B cell (primary cell): ENCODE measurements at regions of chr16 and their contacts with region 1.

Region 1: GRCh38 chr16:89909777-89910716 is 8.6 kb upstream of the MC1R start:
- DNase-seq: peak; percentile 77
- ATAC-seq: peak; percentile 80
- H3K4me3 ChIP-seq: no peak overlapping the region
- H3K4me3 Mint-ChIP-seq: no peak overlapping the region
- H3K27ac ChIP-seq: no peak overlapping the region
- H3K27ac Mint-ChIP-seq: no peak overlapping the region
- H3K4me1 ChIP-seq: peaks cover 0 to 5% of the 10 kb centered on the region in 2 donors
- H3K4me1 Mint-ChIP-seq: peaks cover 12% of the 10 kb centered on the region
- H3K27me3 ChIP-seq: no peaks in the 10 kb centered on the region
- H3K27me3 Mint-ChIP-seq: no peaks in the 10 kb centered on the region
- CTCF ChIP-seq: peak; percentile 91

Region 2: GRCh38 chr16:89706507-89707263 is 203.4 kb before region 1 on chr16:
- CTCF ChIA-PET with region 1: interaction called, 28 read pairs
- POLR2A ChIA-PET with region 1: no interaction called
- intact Hi-C with region 1: loop called (anchors 1 kb)
- DNase-seq: no peak
- ATAC-seq: no peak
- H3K4me3 ChIP-seq: no peak overlapping the region
- H3K4me3 Mint-ChIP-seq: no peak overlapping the region
- H3K27ac ChIP-seq: no peak overlapping the region
- H3K27ac Mint-ChIP-seq: no peak overlapping the region
- H3K4me1 ChIP-seq: peaks cover 8 to 14% of the 10 kb centered on the region in 2 donors
- H3K4me1 Mint-ChIP-seq: peaks cover 9% of the 10 kb centered on the region
- H3K27me3 ChIP-seq: no peaks in the 10 kb centered on the region
- H3K27me3 Mint-ChIP-seq: no peaks in the 10 kb centered on the region
- CTCF ChIP-seq: no peak

Region 3: DNA sequence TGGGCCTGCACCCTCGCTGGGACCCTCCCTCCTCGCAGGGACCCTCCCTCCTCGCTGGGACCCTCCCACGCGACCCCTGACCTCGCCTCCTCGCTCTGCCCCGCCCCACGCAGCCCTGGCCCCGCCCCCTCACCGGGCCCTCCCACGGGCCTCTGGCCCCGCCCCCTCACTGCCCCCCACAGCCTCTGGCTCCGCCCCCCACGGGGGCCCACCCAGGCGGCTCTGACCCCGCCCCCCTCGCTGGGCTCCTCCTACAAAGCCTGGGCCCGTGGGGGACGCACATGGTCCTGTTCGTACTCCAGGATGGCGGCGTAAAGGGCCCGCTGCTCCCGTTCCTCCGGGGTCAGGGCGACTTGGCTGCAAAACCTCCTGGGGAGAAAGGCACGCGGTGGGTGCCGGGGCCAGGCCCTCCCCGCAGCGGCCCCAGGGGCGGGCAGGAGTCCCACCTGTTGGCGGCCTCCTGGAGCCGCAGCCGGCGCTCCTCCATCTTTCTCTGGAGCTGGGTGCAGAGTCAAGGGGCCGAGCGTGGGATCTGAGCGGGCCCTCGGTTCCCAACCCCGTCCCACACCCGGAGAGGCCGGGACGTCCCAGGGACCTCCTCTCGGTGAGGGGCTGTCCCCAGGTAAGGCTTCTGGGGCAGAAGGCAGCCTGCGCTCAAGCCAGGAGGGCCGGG is 198.3 kb before region 1 on chr16:
- CTCF ChIA-PET with region 1: interaction called, 28 read pairs
- POLR2A ChIA-PET with region 1: no interaction called
- intact Hi-C with region 1: loop called (anchors 1 kb)
- DNase-seq: peak; percentile 82
- ATAC-seq: peak; percentile 95
- H3K4me3 ChIP-seq: peak overlapping the region in 4 of 5 experiments; percentile 35 to 67 (median 58)
- H3K4me3 Mint-ChIP-seq: peak overlapping the region; percentile 67
- H3K27ac ChIP-seq: no peak overlapping the region
- H3K27ac Mint-ChIP-seq: no peak overlapping the region
- H3K4me1 ChIP-seq: peaks cover 8 to 11% of the 10 kb centered on the region in 2 donors
- H3K4me1 Mint-ChIP-seq: peaks cover 4% of the 10 kb centered on the region
- H3K27me3 ChIP-seq: no peaks in the 10 kb centered on the region
- H3K27me3 Mint-ChIP-seq: no peaks in the 10 kb centered on the region
- CTCF ChIP-seq: no peak

Region 4: GRCh38 chr16:89736554-89736953 is 173.5 kb before region 1 on chr16:
- CTCF ChIA-PET with region 1: no interaction called
- POLR2A ChIA-PET with region 1: interaction called, 10 read pairs
- intact Hi-C with region 1: no loop called
- DNase-seq: no peak
- ATAC-seq: no peak
- H3K4me3 ChIP-seq: no peak overlapping the region
- H3K4me3 Mint-ChIP-seq: no peak overlapping the region
- H3K27ac ChIP-seq: no peak overlapping the region
- H3K27ac Mint-ChIP-seq: no peak overlapping the region
- H3K4me1 ChIP-seq: peaks cover 0 to 10% of the 10 kb centered on the region in 2 donors
- H3K4me1 Mint-ChIP-seq: peaks cover 10% of the 10 kb centered on the region
- H3K27me3 ChIP-seq: no peaks in the 10 kb centered on the region
- H3K27me3 Mint-ChIP-seq: no peaks in the 10 kb centered on the region
- CTCF ChIP-seq: no peak

Region 5: GRCh38 chr16:89873972-89874689 is 35.9 kb before region 1 on chr16:
- CTCF ChIA-PET with region 1: interaction called, 3 read pairs
- POLR2A ChIA-PET with region 1: interaction called, 12 read pairs
- intact Hi-C with region 1: no loop called
- DNase-seq: peak; percentile 99
- ATAC-seq: peak; percentile 82
- H3K4me3 ChIP-seq: peak overlapping the region in 4 of 5 experiments; percentile 92 to 99 (median 97)
- H3K4me3 Mint-ChIP-seq: peak overlapping the region; percentile 95
- H3K27ac ChIP-seq: peak overlapping the region; percentile 100
- H3K27ac Mint-ChIP-seq: peak overlapping the region; percentile 99
- H3K4me1 ChIP-seq: peaks cover 14 to 19% of the 10 kb centered on the region in 2 donors
- H3K4me1 Mint-ChIP-seq: peaks cover 16% of the 10 kb centered on the region
- H3K27me3 ChIP-seq: no peaks in the 10 kb centered on the region
- H3K27me3 Mint-ChIP-seq: no peaks in the 10 kb centered on the region
- CTCF ChIP-seq: no peak

Region 6: DNA sequence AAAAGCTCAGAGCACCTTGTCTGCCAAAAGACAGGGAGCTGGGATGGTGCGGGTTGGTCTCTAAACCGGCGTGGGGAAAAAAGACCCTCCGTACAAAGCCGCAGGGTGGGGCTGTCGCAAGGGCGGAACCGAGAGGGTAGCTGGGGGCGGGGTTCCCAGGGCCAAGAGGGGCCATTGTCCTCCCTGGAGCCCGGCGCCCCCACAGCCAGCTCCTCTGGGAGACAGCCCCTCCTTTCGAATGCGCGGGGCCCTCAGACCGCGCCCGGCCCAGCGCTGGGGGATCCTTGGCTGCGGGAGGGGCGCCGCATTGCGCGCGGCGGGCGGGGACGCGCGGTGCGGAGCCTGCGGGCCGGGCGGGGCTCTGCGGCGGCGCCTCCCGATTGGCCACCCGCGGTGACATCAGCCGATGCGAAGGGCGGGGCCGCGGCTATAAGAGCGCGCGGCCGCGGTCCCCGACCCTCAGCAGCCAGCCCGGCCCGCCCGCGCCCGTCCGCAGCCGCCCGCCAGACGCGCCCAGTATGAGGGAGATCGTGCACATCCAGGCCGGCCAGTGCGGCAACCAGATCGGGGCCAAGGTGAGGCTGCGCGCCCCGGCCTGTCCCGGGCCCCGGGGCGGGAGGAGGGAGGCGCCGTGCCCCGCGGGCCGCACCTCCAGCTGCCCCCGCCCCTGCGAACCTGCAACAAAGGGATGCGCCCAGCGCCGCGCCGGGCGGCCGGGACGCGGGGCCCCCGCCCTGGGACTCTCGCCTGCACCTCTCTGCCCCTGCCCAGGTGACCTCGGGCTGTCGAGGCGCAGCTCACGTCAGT is 13.0 kb after region 1 on chr16 and contains the start of gene TUBB3:
- CTCF ChIA-PET with region 1: interaction called, 11 read pairs
- POLR2A ChIA-PET with region 1: interaction called, 5 read pairs
- intact Hi-C with region 1: no loop called
- DNase-seq: peak; percentile 68
- ATAC-seq: peak; percentile 43
- H3K4me3 ChIP-seq: peak within 1 kb of the TSS; percentile 32 to 55 (median 39)
- H3K4me3 Mint-ChIP-seq: peak within 1 kb of the TSS; percentile 77
- H3K27ac ChIP-seq: no peak within 1 kb of the TSS
- H3K27ac Mint-ChIP-seq: no peak within 1 kb of the TSS
- H3K4me1 ChIP-seq: peaks cover 63 to 65% of the 10 kb centered on the region in 2 donors
- H3K4me1 Mint-ChIP-seq: peaks cover 45% of the 10 kb centered on the region
- H3K27me3 ChIP-seq: peaks cover 0 to 88% (median 47%) of the 10 kb centered on the region in 4 experiments
- H3K27me3 Mint-ChIP-seq: peaks cover 27% of the 10 kb centered on the region
- CTCF ChIP-seq: no peak
- total RNA-seq, gene TUBB3: 0.34 and 0.70 TPM in 2 replicates